ENCODE measurements at regions of chr11 and their contacts with region 1.

Region 1: GRCh38 chr11:105862736-105863367 is 159.2 kb downstream of the MSANTD4 start:
- DNase-seq: peak; percentile 68
- ATAC-seq: peak; percentile 90
- H3K4me3 ChIP-seq: no peak overlapping the region
- H3K27ac ChIP-seq: no peak overlapping the region
- H3K4me1 ChIP-seq: no peaks in the 10 kb centered on the region
- H3K27me3 ChIP-seq: no peaks in the 10 kb centered on the region
- CTCF ChIP-seq: peak; percentile 81
- POLR2A ChIP-seq: no peak
- RAD21 ChIP-seq: peak; percentile 91

Region 2: DNA sequence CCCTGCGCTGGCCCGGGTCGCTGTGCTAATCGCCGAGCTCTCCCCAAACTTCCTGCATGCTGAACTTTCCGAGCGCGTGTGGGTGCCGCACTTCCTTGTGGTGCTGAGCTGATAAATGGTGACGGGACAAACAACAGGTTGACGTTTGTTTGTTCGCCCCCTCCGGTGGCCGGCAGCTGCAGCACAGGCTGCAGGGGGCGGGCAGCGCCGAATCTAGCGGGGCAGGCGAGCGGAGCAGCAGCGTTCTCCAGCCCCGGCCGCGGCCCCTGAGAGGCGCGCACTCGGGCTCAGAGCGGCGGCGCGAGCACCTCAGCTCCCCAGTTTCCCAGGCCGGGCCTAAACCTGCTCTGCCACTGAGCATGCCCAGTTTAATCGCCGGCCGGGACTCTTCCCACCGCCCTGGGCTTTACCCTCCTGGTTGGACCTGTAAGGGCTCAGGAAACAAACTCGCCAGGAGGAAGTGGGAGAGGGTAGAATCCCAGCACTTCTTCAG is 1698.8 kb before region 1 on chr11 and contains the start of gene PDGFD:
- CTCF ChIA-PET with region 1: no interaction called
- POLR2A ChIA-PET with region 1: no interaction called
- dilution Hi-C with region 1: no loop called
- in situ Hi-C with region 1: no loop called
- intact Hi-C with region 1: loop called (anchors 5 kb)
- DNase-seq: peak; percentile 70
- ATAC-seq: peak; percentile 95
- H3K4me3 ChIP-seq: peak within 1 kb of the TSS; percentile 82
- H3K27ac ChIP-seq: peak within 1 kb of the TSS; percentile 23; the same call in 1 of the 2 replicates
- H3K4me1 ChIP-seq: peaks cover 3% of the 10 kb centered on the region
- H3K27me3 ChIP-seq: no peaks in the 10 kb centered on the region
- CTCF ChIP-seq: peak; percentile 43
- POLR2A ChIP-seq: no peak
- RAD21 ChIP-seq: peak; percentile 29; the same call in 1 of the 2 replicates
- total RNA-seq, gene PDGFD: 3.0 and 3.1 TPM in 2 replicates

Region 3: GRCh38 chr11:104609311-104610085 is 1253.4 kb before region 1 on chr11:
- CTCF ChIA-PET with region 1: no interaction called
- POLR2A ChIA-PET with region 1: no interaction called
- dilution Hi-C with region 1: no loop called
- in situ Hi-C with region 1: loop called (anchors 10 kb)
- intact Hi-C with region 1: loop called (anchors 1 kb)
- DNase-seq: peak; percentile 75
- ATAC-seq: peak; percentile 94
- H3K4me3 ChIP-seq: no peak overlapping the region
- H3K27ac ChIP-seq: no peak overlapping the region
- H3K4me1 ChIP-seq: no peaks in the 10 kb centered on the region
- H3K27me3 ChIP-seq: no peaks in the 10 kb centered on the region
- CTCF ChIP-seq: peak; percentile 70
- POLR2A ChIP-seq: no peak
- RAD21 ChIP-seq: peak; percentile 78

Region 4: GRCh38 chr11:104968355-104968855 is 894.4 kb before region 1 on chr11 and contains the start of gene CASP4:
- CTCF ChIA-PET with region 1: no interaction called
- POLR2A ChIA-PET with region 1: no interaction called
- dilution Hi-C with region 1: no loop called
- in situ Hi-C with region 1: no loop called
- intact Hi-C with region 1: loop called (anchors 5 kb)
- DNase-seq: peak; percentile 78
- ATAC-seq: peak; percentile 65
- H3K4me3 ChIP-seq: peak within 1 kb of the TSS; percentile 87
- H3K27ac ChIP-seq: peak within 1 kb of the TSS; percentile 99
- H3K4me1 ChIP-seq: peaks cover 10% of the 10 kb centered on the region; the same call in 1 of the 2 replicates
- H3K27me3 ChIP-seq: no peaks in the 10 kb centered on the region
- CTCF ChIP-seq: no peak
- POLR2A ChIP-seq: peak; percentile 51; the same call in 1 of the 2 replicates
- RAD21 ChIP-seq: no peak
- total RNA-seq, gene CASP4: 89.4 and 91.9 TPM in 2 replicates

Region 5: DNA sequence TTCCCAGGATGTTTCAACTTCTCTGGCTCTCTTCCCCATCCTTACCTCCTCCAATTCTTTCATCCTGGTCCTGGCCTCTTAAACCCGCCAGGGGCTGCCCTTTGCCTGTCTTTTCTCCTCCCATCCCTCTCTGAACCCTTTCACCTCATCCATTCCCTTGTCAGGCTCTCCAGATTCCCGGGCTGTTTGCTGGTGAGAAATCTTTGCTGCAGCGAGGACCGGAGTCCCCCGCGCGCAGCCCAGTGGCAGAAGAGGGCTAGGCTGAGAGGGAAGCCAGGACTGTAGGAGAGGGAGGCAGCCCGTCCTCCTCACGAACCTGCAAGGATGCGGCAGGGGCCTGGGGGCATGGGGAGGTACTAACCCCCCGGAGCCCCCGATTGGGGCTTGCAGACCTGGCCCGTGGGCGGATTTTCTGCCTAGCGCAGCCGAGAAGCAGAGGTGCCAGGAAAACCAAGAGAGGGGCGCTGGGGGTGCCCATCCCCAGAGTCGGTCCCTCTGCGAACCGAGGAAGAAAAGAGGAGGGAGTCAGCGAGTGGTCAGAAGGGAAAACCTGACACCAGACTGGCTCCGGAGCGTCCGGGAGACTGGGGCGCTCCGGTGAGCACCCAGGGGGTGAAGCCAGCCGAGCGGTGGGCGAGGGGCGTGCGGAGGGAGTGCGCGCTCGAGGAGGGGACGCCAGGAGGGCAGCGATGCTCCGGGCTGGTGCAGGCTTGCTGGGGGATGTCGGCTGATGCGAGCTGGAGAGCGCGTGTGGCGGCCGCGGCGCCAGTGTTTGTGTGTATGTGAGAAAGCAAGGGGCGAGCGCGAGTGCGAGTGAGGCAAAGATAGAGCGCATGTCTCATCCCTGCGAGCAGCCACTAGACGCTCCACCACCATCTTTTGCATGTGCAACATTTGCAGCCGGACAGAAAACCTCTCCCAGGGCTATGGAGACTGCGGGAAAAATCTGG is 252.7 kb before region 1 on chr11 and contains the start of gene GRIA4:
- CTCF ChIA-PET with region 1: no interaction called
- POLR2A ChIA-PET with region 1: no interaction called
- dilution Hi-C with region 1: no loop called
- in situ Hi-C with region 1: no loop called
- intact Hi-C with region 1: loop called (anchors 5 kb)
- DNase-seq: peak; percentile 74
- ATAC-seq: peak; percentile 89
- H3K4me3 ChIP-seq: peak within 1 kb of the TSS; percentile 53
- H3K27ac ChIP-seq: peak within 1 kb of the TSS; percentile 10; the same call in 1 of the 2 replicates
- H3K4me1 ChIP-seq: no peaks in the 10 kb centered on the region
- H3K27me3 ChIP-seq: no peaks in the 10 kb centered on the region
- CTCF ChIP-seq: no peak
- POLR2A ChIP-seq: no peak
- RAD21 ChIP-seq: 0 out of 2 replicates have a peak, but pooled peaks have one; percentile 7
- total RNA-seq, gene GRIA4: 0.36 and 0.56 TPM in 2 replicates

Region 6: DNA sequence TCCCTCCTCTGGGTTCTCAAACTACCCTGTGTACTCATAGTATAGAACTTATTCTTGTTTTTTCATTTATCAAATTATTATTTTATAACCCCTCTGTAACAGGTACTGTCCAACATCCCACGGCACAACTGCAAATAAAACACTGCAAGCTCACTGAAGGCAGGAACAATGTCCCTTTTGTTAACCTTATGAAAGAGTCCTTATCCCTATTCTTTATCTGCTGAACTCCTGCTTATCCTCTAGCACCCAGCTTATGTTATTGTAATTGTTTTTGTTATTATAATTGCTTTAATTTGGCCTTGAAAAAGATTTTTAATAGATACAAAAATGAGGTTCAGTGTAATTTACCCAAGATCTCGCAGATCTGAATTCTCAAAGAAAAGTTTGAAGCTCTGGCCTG is 28.8 kb after region 1 on chr11:
- CTCF ChIA-PET with region 1: no interaction called
- POLR2A ChIA-PET with region 1: no interaction called
- dilution Hi-C with region 1: no loop called
- in situ Hi-C with region 1: no loop called
- intact Hi-C with region 1: no loop called
- DNase-seq: no peak
- ATAC-seq: no peak
- H3K4me3 ChIP-seq: no peak overlapping the region
- H3K27ac ChIP-seq: no peak overlapping the region
- H3K4me1 ChIP-seq: no peaks in the 10 kb centered on the region
- H3K27me3 ChIP-seq: no peaks in the 10 kb centered on the region
- CTCF ChIP-seq: no peak
- POLR2A ChIP-seq: no peak
- RAD21 ChIP-seq: no peak

Region 7: DNA sequence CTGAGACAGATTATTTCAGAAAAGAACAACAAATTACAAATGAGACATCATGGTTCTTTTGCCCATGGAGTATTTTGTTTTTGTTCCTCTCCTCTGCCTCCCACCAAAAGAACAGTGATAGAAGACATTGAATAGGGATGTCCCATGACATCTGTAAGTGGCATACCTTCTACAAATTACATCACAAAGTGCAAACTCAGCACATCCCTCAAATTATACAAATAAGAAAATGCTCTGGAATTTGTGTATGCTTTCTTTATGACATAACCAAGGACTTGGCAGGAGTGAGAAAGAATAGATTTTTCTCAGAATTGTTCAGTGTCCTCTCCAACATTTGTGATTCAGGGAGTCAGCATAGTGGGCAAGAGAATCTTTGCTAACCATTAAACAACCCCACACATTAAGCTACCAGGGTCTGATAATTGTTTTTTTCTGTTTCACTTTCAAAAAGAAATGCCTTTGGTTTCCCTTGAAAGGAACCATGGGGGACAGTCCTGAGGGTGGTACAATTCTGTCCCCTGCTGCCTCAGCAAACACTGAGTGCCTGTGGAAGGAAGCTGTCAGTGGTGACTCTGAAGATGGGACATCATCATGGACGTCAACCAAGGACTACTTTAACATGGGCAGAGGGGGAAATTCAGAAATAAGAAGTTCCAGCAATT is 644.9 kb after region 1 on chr11:
- CTCF ChIA-PET with region 1: no interaction called
- POLR2A ChIA-PET with region 1: no interaction called
- dilution Hi-C with region 1: no loop called
- in situ Hi-C with region 1: no loop called
- intact Hi-C with region 1: no loop called
- DNase-seq: no peak
- ATAC-seq: no peak
- H3K4me3 ChIP-seq: no peak overlapping the region
- H3K27ac ChIP-seq: no peak overlapping the region
- H3K4me1 ChIP-seq: no peaks in the 10 kb centered on the region
- H3K27me3 ChIP-seq: no peaks in the 10 kb centered on the region
- CTCF ChIP-seq: no peak
- POLR2A ChIP-seq: no peak
- RAD21 ChIP-seq: no peak